HEK293T (cell line): ENCODE measurements at regions of chr10 and their contacts with region 1.

Region 1: DNA sequence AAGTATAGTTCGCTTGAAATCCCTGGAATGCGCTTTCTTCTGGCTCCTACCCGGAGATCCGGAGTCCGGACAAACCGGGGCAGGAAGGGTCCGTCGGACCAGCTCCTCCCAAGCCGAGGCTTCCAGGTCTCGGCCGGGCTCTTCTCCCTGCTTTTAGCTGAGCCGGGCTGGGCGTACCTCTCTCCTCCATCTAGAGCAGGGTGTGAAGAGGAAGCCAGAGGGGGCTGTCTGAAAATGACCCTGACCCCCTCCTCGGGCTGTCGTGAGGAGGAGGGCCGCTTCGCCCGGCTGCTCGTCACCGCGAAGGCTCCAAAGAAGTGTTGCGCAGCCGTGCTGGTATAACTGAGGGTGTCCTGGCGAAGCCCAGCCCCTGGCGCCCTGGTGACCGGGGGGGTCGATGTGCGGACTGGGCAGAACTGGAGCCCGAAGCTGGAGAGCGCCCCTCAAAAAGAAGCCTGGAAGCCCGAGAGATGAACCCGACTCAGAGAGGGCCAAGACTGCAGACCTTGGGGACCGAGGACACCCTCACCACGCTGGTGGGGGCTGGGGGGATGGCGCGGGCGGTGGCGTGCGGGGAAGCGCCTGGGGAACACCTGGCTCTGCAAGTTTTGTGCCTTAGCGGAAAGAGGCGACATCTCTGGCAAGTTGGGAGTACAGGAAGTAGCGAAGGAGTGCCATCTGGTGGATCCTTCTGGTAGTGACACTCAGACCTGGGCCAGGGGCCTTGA is 5.7 kb downstream of the KAZALD1 start:
- DNase-seq: peak; percentile 88

Region 2: GRCh38 chr10:101050208-101051069 is 17.1 kb before region 1 on chr10:
- CTCF ChIA-PET with region 1: interaction called, 14 read pairs
- POLR2A ChIA-PET with region 1: interaction called, 81 read pairs
- DNase-seq: peak; percentile 90